Activated CD8-positive, alpha-beta T cell treated with anti-CD3 and anti-CD28 coated beads, Interleukin-2, amount 10 ng/mL, durations not matched to agents 7 days and 5 days (primary cell): ENCODE measurements at regions of chr5 and their contacts with region 1.

Region 1: DNA sequence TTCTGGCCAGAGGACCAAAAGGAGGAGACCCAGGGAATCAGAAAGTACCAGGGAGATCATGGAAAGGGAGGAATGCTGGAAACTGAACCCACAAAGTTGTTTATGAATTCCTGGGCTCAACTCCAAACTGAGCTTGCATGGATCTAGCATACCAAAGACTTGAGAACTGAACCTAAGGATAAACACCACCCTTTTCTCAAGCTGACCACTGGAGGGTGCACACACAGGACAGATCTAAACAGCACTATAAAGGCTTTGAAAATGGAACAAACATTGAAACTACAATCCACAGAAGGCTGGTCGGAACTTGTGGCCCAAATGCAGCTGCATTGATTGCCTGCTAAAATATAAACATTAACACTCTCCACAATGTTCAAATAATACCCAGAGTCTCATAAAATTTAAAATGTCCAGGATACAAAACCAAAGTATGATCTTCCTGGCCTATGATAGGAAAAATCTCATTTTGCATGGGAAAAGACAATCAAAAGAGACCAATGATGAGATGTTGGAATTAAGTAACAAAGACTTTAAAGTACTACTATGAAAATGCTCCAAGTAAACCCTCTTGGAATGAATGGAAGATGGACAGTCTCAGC is 15.6 kb upstream of the IRF1 start:
- DNase-seq: peak; percentile 51
- ATAC-seq: peak; percentile 68
- H3K4me3 Mint-ChIP-seq: no peak overlapping the region
- H3K27ac Mint-ChIP-seq: no peak overlapping the region
- H3K4me1 Mint-ChIP-seq: peaks cover 14% of the 10 kb centered on the region
- H3K27me3 Mint-ChIP-seq: peaks cover 13% of the 10 kb centered on the region

Region 2: DNA sequence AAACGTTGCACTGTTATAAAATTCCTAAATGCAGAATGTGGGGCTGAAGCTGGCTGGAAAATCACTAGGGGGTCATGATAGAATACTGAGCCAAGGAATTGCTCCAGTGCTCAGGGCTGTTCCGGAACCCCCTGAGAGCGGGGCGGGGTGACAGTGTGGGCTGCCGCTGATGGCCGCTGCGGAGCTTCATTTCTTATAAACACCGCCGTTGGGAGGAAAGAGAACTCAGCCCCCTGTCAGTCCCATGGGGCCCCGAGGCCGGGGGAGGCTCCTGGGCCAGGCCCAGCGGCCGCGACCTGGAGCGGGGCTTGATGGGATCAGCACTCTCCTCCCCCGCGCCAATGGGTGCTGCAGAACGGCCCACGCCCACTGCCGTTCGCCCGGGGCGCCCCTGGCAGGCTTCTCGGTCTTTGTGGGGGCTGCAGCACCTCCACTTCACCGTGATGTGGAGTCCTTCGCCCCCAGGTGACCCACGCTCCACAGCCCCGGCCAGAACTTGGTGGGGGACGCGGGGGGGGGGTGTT is 10.5 kb before region 1 on chr5:
- CTCF ChIA-PET with region 1: interaction called, 23 read pairs
- POLR2A ChIA-PET with region 1: interaction called, 720 read pairs
- DNase-seq: peak; percentile 87
- ATAC-seq: peak; percentile 59
- H3K4me3 Mint-ChIP-seq: peak overlapping the region; percentile 83
- H3K27ac Mint-ChIP-seq: peak overlapping the region; percentile 95
- H3K4me1 Mint-ChIP-seq: peaks cover 77% of the 10 kb centered on the region
- H3K27me3 Mint-ChIP-seq: no peaks in the 10 kb centered on the region